ENCODE measurements at regions of chr11 and their contacts with region 1.

Region 1: GRCh38 chr11:121650351-121651256 is 197.8 kb upstream of the SORL1-AS1 start:
- DNase-seq: peak; percentile 33
- H3K4me3 Mint-ChIP-seq: no peak overlapping the region
- H3K27ac Mint-ChIP-seq: peak overlapping the region; percentile 8
- H3K4me1 Mint-ChIP-seq: peaks cover 28% of the 10 kb centered on the region
- H3K27me3 Mint-ChIP-seq: peaks cover 6% of the 10 kb centered on the region

Region 2: DNA sequence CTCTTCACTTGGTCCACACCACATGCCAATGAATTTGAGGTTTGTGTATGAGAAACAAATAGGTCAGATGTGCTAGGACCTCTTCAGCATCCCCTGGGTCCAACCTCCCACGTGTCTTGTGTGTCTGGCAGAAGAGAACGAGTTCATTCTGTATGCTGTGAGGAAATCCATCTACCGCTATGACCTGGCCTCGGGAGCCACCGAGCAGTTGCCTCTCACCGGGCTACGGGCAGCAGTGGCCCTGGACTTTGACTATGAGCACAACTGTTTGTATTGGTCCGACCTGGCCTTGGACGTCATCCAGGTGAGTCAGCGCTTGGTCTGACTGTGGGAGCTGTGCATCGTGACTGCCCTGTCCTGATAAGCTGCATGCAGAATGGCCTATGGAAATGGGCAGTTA is 96.8 kb before region 1 on chr11:
- CTCF ChIA-PET with region 1: no interaction called
- intact Hi-C with region 1: no loop called
- DNase-seq: no peak
- H3K4me3 Mint-ChIP-seq: no peak overlapping the region
- H3K27ac Mint-ChIP-seq: no peak overlapping the region
- H3K4me1 Mint-ChIP-seq: peaks cover 17% of the 10 kb centered on the region
- H3K27me3 Mint-ChIP-seq: no peaks in the 10 kb centered on the region

Region 3: GRCh38 chr11:121767433-121767832 is 116.8 kb after region 1 on chr11:
- CTCF ChIA-PET with region 1: no interaction called
- intact Hi-C with region 1: loop called (anchors 1 kb)
- DNase-seq: peak; percentile 6
- H3K4me3 Mint-ChIP-seq: no peak overlapping the region
- H3K27ac Mint-ChIP-seq: no peak overlapping the region
- H3K4me1 Mint-ChIP-seq: peaks cover 4% of the 10 kb centered on the region
- H3K27me3 Mint-ChIP-seq: no peaks in the 10 kb centered on the region

Measured in activated naive CD4-positive, alpha-beta T cell treated with anti-CD3 and anti-CD28 coated beads for 36 hours (primary cell).